ENCODE measurements at regions of chr1 and their contacts with region 1.

Region 1: DNA sequence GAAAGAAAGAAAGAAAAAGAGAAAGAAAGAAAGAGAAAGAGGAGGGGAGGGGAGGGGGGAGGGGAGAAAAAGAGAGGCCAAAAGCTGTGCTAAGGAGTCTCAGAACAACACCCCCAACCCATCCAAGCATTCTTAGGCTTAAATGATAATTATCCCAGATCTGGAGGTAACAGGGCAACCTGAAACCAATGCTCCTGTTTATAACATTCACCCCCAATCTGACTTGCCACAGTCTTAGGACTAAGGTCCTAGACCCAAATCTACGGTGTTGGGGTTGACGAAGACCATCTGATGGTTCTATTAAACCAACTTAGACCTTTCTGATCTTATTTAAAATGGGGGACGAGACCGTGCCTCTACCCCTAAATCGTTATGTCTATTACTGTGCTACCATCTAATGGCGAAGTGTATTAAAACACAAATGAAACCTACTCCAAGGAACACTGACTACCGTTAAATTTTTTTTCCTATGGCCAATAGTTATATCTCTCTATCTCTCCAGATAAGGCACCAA is 119.3 kb upstream of the CDC42BPA start:
- DNase-seq: no peak
- H3K4me3 ChIP-seq: peak overlapping the region; percentile 61
- H3K27ac ChIP-seq: peak overlapping the region; percentile 55
- H3K4me1 ChIP-seq: peaks cover 84% of the 10 kb centered on the region
- H3K27me3 ChIP-seq: no peaks in the 10 kb centered on the region
- CTCF ChIP-seq: peak; percentile 67

Region 2: GRCh38 chr1:227131193-227131592 is 306.4 kb before region 1 on chr1:
- intact Hi-C with region 1: loop called (anchors 5 kb)
- DNase-seq: no peak
- H3K4me3 ChIP-seq: no peak overlapping the region
- H3K27ac ChIP-seq: no peak overlapping the region
- H3K4me1 ChIP-seq: no peaks in the 10 kb centered on the region
- H3K27me3 ChIP-seq: no peaks in the 10 kb centered on the region
- CTCF ChIP-seq: peak; percentile 60

Region 3: GRCh38 chr1:227318003-227318852 is 119.3 kb before region 1 on chr1 and contains the start of gene CDC42BPA:
- intact Hi-C with region 1: loop called (anchors 10 kb)
- DNase-seq: peak; percentile 89
- H3K4me3 ChIP-seq: peak within 1 kb of the TSS; percentile 77
- H3K27ac ChIP-seq: peak within 1 kb of the TSS; percentile 98
- H3K4me1 ChIP-seq: peaks cover 32% of the 10 kb centered on the region
- H3K27me3 ChIP-seq: no peaks in the 10 kb centered on the region
- CTCF ChIP-seq: no peak
- total RNA-seq, gene CDC42BPA: 35.1 TPM

Region 4: GRCh38 chr1:227357171-227357880 is 80.2 kb before region 1 on chr1:
- intact Hi-C with region 1: loop called (anchors 10 kb)
- DNase-seq: peak; percentile 71
- H3K4me3 ChIP-seq: no peak overlapping the region
- H3K27ac ChIP-seq: peak overlapping the region; percentile 89
- H3K4me1 ChIP-seq: peaks cover 33% of the 10 kb centered on the region
- H3K27me3 ChIP-seq: no peaks in the 10 kb centered on the region
- CTCF ChIP-seq: no peak

Region 5: GRCh38 chr1:227521782-227522181 is 84.2 kb after region 1 on chr1:
- intact Hi-C with region 1: no loop called
- DNase-seq: no peak
- H3K4me3 ChIP-seq: no peak overlapping the region
- H3K27ac ChIP-seq: no peak overlapping the region
- H3K4me1 ChIP-seq: no peaks in the 10 kb centered on the region
- H3K27me3 ChIP-seq: no peaks in the 10 kb centered on the region
- CTCF ChIP-seq: no peak

Measured in left ventricle myocardium inferior (tissue), 1 donor.